Activated CD4-positive, alpha-beta T cell treated with anti-CD3 and anti-CD28 coated beads for 36 hours (primary cell): ENCODE measurements at regions of chr17 and their contacts with region 1.

Region 1: DNA sequence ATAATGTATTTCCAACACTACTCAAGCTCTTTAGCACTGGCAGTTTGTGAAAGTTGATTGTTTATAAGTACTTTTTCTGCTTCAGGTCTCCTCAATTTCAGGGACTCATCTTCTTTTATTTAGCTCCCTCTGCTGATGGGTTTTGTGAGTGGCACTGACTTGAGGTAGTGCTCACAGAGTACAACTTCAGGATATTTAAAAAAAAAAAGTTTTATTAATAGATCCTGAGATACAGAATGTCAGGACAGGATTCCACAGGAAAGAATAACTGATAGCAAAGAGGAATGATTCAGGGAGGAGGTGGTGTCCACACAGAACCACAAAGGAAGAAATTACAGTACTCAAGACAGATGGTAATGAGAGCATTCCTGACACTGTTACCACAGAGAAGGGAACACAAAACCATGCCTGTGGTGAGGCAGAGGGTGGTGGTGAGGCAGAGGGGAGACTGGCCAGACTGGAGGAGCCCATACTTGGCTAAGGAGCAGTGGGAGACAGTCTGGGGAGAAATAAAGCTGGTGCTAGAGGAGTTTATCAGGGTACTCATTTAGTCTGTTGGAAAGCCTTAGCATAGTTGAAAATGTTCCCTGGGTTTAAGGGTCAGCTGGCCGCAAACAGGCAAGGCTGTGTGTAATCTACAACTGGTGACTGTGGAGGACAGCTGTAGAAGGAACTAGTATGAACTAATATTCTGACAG is 63.7 kb downstream of the SPAG9 start:
- DNase-seq: peak; percentile 25
- ATAC-seq: peak; percentile 61
- H3K4me3 Mint-ChIP-seq: no peak overlapping the region
- H3K27ac Mint-ChIP-seq: no peak overlapping the region
- H3K4me1 Mint-ChIP-seq: peaks cover 8% of the 10 kb centered on the region
- H3K27me3 Mint-ChIP-seq: no peaks in the 10 kb centered on the region

Region 2: DNA sequence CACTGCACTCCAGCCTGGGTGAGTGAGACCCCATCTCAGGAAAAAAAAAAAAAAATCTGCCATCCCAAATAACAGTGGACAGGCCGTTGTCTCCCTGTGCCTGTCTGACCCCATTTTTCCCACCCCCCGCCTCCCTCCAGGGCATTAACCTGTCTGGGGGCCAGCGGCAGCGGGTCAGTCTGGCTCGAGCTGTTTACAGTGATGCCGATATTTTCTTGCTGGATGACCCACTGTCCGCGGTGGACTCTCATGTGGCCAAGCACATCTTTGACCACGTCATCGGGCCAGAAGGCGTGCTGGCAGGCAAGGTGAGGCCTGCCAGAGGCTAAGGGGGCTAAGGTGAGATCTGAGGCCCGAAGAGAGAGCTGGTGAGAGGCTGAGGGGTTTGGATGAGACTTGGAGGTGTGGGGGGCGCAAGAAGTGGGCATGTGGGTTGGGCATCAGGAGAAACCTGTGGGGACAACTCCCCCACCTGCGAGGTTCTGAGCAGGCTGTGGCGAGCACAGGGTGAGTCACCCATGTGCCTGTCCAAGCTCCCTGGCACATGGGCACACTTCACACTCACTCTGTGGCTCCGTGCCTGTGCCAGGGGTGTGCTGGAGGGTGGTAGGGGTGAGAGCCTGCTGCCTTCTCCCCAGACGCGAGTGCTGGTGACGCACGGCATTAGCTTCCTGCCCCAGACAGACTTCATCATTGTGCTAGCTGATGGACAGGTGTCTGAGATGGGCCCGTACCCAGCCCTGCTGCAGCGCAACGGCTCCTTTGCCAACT is 383.9 kb before region 1 on chr17:
- CTCF ChIA-PET with region 1: no interaction called
- POLR2A ChIA-PET with region 1: no interaction called
- intact Hi-C with region 1: no loop called
- DNase-seq: no peak
- ATAC-seq: no peak
- H3K4me3 Mint-ChIP-seq: no peak overlapping the region
- H3K27ac Mint-ChIP-seq: no peak overlapping the region
- H3K4me1 Mint-ChIP-seq: no peaks in the 10 kb centered on the region
- H3K27me3 Mint-ChIP-seq: peaks cover 3% of the 10 kb centered on the region

Region 3: DNA sequence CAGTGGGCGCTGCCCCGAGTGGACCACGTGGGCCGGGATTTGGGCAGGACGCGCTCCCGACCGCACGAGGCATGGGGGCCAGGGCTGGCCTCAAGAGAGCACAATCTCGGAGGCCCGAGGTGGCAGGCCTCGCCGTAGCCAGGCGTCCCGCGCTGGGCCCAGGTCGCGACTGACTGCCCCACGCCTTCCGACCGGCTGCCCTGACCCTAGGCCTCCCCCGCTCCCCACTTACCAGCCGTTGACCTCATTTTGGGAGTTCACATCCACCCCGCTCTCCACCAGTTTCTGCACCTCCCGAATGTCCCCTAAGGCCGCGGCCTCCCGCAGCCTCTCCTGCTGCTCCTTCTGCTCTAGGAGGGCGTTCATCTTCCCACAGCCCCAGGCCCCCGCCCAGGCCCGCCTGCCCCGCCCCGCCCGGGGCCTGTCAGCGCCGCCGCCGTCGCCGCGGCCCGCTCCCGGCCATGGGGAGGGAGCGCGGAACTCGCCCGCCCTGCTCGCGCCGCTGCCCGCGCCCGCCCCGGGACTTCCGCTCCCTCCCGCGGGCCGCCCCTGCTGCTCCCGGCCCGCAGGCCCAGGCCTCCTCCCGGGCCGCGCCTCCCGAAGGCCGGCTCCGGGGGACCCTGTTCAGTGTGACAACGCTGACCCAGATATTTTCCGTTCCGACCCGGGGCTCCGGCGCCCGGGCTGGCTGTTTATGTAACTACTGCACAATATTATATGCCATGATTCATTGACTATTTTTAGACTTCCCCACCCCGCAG is 349.5 kb before region 1 on chr17 and contains the start of gene ANKRD40:
- CTCF ChIA-PET with region 1: no interaction called
- POLR2A ChIA-PET with region 1: no interaction called
- intact Hi-C with region 1: no loop called
- DNase-seq: peak; percentile 94
- ATAC-seq: peak; percentile 76
- H3K4me3 Mint-ChIP-seq: peak within 1 kb of the TSS; percentile 91
- H3K27ac Mint-ChIP-seq: peak within 1 kb of the TSS; percentile 99
- H3K4me1 Mint-ChIP-seq: peaks cover 46% of the 10 kb centered on the region
- H3K27me3 Mint-ChIP-seq: no peaks in the 10 kb centered on the region
- total RNA-seq, gene ANKRD40: 28.0 to 29.8 TPM

Region 4: DNA sequence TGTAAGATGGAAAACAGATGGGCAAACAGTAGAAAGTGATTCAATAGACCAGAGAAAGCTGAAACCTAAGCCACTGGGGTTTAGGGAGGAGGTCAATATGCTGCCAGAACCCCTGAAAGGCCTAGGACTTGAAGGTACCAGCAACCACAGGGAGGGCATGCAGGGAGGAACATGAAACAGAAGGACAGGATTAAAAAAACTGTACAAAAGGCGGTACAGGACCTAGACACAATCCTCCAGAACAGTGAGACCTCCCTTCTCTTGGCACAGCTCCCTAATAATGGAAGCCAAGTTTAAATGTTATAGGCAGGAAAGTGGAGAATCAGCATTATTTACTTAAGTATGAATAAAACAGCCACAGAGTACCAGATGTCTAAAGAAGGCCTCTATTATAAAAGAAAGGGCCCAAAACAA is 41.8 kb before region 1 on chr17:
- CTCF ChIA-PET with region 1: interaction called, 14 read pairs
- POLR2A ChIA-PET with region 1: no interaction called
- intact Hi-C with region 1: no loop called
- DNase-seq: no peak
- ATAC-seq: no peak
- H3K4me3 Mint-ChIP-seq: no peak overlapping the region
- H3K27ac Mint-ChIP-seq: no peak overlapping the region
- H3K4me1 Mint-ChIP-seq: no peaks in the 10 kb centered on the region
- H3K27me3 Mint-ChIP-seq: no peaks in the 10 kb centered on the region

Region 5: DNA sequence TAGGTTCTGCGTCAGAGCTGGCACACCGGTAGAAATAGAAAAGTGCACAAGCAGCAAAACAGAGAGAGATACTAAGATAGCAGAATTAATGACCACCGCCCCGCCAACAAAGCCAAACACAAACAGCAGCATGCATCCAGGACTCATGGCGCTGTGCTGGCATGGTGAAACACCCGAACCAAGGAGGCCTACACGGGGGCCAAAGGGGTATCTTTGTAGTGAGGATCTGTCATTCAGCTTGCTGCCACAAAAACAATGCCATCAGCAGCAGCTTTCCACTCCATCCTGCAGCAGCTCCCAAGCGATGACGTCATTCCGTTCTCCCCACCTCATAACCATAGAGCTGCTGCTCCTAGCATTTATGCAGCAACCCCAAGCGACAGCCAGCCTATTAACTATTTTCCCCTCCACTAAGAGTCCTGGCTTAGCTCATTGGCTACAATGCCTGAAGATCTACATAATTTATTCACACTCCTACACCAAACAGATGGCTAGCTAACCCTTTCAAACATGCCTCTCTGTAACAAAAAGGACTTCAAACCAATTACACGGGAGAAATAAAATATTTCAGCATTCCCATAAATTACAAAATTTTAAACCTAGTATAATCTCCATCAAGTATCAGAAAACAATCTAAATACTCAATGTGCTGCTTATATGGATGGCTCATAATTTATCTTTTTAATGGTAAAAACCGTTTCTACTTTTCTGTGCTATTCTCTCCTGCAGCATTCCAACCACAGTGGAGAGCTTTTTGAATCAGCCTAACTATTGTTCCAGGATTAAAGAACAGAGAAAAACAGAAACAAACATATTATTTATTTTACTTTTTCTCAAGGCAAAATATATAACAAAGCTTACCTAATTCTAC is 10.2 kb before region 1 on chr17:
- CTCF ChIA-PET with region 1: interaction called, 20 read pairs
- POLR2A ChIA-PET with region 1: no interaction called
- intact Hi-C with region 1: no loop called
- DNase-seq: no peak
- ATAC-seq: no peak
- H3K4me3 Mint-ChIP-seq: no peak overlapping the region
- H3K27ac Mint-ChIP-seq: no peak overlapping the region
- H3K4me1 Mint-ChIP-seq: peaks cover 2% of the 10 kb centered on the region
- H3K27me3 Mint-ChIP-seq: no peaks in the 10 kb centered on the region